Aorta (tissue), 5 donors: ENCODE measurements at regions of chr2 and their contacts with region 1.

Region 1: DNA sequence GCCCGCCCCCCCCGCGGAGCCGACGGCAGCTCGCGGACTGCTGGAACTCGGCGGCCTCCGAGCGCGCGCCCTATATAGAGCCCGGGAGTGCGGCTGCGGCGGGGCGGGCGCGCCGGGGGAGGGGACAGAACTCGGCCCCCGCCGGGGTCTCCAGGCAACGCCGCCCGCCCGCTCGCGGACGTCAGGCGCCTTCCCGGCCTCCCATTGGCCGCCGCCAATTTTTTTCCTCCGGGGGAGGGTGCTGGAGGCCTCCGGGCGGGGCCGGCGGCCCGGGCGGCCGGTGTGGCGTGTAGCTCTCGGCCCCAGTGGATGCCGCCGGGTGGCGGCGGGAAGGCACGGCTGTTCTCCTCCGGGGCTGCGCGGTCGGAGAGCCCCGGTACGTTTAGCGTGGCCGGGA is at the start of gene ZFP36L2:
- DNase-seq: peak; percentile 98
- ATAC-seq: peak; percentile 89
- H3K4me3 ChIP-seq: peak within 1 kb of the TSS; percentile 74 to 96
- H3K27ac ChIP-seq: peak within 1 kb of the TSS; percentile 71 to 94
- H3K4me1 ChIP-seq: no peaks in the 10 kb centered on the region
- H3K27me3 ChIP-seq: no peaks in the 10 kb centered on the region
- total RNA-seq, gene ZFP36L2: 180 to 231 TPM

Region 2: DNA sequence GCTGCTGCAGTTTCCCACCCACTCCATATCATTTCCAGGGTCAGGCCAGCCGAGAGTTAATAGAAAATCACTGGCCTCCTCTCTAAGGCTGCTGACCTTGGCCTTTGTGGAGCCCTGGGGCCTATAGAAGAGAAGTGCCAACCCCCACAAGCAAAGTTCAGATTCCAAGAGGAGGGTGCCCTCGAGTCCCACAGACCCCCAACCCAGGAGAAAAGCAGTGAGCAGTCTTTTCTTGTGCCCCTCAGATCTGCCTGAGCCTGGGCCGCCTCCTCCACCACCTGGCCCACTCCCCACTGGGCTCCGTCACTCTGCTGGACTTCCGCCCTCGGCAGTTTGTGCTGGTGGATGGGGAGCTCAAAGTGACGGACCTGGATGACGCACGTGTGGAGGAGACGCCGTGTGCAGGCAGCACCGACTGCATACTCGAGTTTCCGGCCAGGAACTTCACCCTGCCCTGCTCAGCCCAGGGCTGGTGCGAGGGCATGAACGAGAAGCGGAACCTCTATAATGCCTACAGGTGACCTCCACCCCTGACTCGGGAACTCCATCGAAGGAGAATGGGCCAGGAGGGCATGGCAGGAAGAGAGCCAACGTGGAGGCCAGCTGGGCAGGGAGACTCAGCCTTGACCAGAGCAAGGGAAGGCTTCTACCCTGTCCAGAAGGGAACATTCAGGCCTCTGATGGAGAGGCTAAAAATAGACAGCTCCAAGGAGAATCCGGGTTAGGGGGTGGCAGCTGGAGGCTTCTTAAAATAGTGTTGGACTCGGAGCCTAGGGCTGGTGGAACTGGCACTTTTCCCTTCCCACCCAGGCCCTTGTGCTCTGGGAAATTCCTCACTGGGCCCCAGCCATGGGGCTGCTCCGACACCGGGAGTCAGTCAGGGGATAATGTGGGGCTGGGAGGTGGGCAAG is 1172.5 kb before region 1 on chr2:
- intact Hi-C with region 1: loop called in 1 of 2 experiments (anchors 10 kb)
- DNase-seq: peak; percentile 84 to 88
- ATAC-seq: peak; percentile 81
- H3K4me3 ChIP-seq: no peak overlapping the region
- H3K27ac ChIP-seq: peak overlapping the region; percentile 79 to 91
- H3K4me1 ChIP-seq: peaks cover 3 to 6% of the 10 kb centered on the region in 2 donors
- H3K27me3 ChIP-seq: no peaks in the 10 kb centered on the region

Region 3: GRCh38 chr2:42944779-42945415 is 281.7 kb before region 1 on chr2:
- intact Hi-C with region 1: loop called in 1 of 2 experiments (anchors 5 kb)
- DNase-seq: no peak
- ATAC-seq: no peak
- H3K4me3 ChIP-seq: no peak overlapping the region
- H3K27ac ChIP-seq: no peak overlapping the region
- H3K4me1 ChIP-seq: no peaks in the 10 kb centered on the region
- H3K27me3 ChIP-seq: no peaks in the 10 kb centered on the region

Region 4: DNA sequence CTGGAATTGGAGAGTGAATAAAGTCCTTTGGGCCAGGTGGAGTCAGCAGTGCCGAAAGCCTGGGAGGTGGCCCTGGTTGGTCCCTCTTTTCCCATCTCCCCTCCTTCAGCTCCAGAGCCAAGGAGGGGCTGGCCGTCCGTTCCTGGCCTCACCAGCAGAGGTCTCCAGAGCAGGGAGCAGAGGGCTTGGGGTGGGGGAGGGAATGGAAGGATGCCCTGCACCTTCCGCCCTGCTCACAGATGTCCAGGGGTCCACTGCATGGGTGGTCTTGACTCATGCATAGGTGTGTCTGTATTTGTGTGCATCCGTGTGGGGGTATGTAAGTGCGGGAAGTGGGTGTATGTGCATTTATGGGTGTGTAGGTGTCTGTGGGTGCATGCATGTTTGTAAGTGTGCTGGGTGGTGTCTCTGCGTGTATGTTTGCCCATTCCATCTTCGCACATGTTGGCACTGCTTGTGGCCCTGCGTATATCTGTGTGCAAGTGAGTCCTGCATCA is 202.0 kb before region 1 on chr2:
- intact Hi-C with region 1: loop called (anchors 2 to 5 kb)
- DNase-seq: peak; percentile 76 to 90
- ATAC-seq: peak; percentile 64
- H3K4me3 ChIP-seq: no peak overlapping the region
- H3K27ac ChIP-seq: no peak overlapping the region
- H3K4me1 ChIP-seq: peaks cover 0 to 1% of the 10 kb centered on the region in 2 donors
- H3K27me3 ChIP-seq: no peaks in the 10 kb centered on the region

Region 5: GRCh38 chr2:43158259-43158880 is 68.2 kb before region 1 on chr2:
- intact Hi-C with region 1: no loop called
- DNase-seq: peak; percentile 87 to 90
- ATAC-seq: peak; percentile 72
- H3K4me3 ChIP-seq: no peak overlapping the region
- H3K27ac ChIP-seq: peak overlapping the region; percentile 80 to 95
- H3K4me1 ChIP-seq: peaks cover 0 to 4% of the 10 kb centered on the region in 2 donors
- H3K27me3 ChIP-seq: no peaks in the 10 kb centered on the region

Region 6: GRCh38 chr2:43178602-43179542 is 47.7 kb before region 1 on chr2:
- intact Hi-C with region 1: no loop called
- DNase-seq: peak; percentile 87 to 89
- ATAC-seq: peak; percentile 90
- H3K4me3 ChIP-seq: no peak overlapping the region
- H3K27ac ChIP-seq: peak overlapping the region in 1 of 2 donors; percentile 95
- H3K4me1 ChIP-seq: no peaks in the 10 kb centered on the region
- H3K27me3 ChIP-seq: no peaks in the 10 kb centered on the region

Region 7: DNA sequence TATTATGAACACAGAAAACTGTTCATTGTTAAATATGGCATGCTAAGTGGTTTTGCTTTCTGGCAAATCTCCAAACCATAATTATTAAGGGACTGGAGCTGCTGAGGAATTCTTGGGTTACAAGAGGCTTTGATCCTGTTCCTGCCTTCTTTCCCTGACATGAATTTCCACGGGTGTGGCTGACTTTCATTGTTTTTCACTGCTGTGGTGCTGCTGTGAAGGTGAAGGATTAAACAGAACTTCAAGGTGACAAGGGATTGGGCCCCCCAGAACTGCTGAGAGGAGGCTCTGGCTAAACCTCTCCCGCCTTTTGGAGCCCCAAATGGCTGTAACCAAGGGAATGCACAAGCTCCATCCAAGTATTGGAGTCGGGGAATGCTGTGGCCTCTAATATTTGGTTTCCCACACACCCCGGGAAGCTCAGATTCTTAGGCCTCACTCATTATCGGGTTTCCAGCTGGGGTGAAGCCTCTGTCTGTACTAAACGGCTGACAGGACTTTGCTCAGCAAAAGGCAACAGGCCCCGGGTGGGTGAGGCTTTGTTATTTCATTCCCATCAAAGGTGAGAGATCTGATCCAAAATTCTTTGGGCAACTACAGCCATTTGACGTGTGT is 28.8 kb after region 1 on chr2:
- intact Hi-C with region 1: no loop called
- DNase-seq: no peak
- ATAC-seq: no peak
- H3K4me3 ChIP-seq: no peak overlapping the region
- H3K27ac ChIP-seq: no peak overlapping the region
- H3K4me1 ChIP-seq: peaks cover 0 to 5% of the 10 kb centered on the region in 2 donors
- H3K27me3 ChIP-seq: no peaks in the 10 kb centered on the region

Region 8: DNA sequence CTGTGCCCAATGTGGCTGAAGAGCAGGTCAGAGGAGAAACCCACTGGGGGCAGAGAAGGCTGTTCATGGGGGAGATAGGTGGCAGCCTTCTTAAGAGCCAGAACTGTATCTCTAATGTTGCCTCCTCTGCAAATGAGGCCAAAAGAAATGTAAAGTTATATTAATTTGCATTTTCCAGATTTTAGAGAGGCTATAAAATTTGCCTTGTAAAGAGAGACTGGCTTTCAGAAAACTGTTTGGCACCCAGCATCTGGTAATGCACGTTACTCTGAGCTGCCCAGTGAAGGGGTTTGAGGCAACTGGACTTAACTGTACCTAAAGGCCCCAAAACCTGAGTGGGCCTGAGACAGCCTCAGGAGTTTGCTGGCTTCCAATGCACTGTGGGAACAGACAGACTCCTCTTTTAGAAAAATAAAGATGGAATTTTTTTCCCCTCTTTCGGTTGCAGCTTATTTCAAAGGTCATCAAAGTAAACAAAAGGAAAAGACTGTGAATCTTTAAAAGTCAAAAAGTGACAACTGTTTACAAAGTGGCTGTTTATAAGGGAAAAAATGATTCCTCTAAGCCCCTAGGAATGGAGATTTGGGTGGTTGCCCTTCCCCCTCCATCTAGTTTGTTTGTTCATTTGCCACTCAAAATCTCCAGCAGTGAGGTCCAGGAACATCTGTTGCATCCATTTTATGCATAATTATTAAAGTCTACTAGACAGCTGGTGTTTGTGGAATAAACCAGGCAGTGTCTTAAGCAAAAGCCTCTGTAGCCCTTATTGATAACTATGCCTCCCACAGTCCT is 132.1 kb after region 1 on chr2:
- intact Hi-C with region 1: no loop called
- DNase-seq: no peak
- ATAC-seq: no peak
- H3K4me3 ChIP-seq: no peak overlapping the region
- H3K27ac ChIP-seq: no peak overlapping the region
- H3K4me1 ChIP-seq: peaks cover 0 to 1% of the 10 kb centered on the region in 2 donors
- H3K27me3 ChIP-seq: no peaks in the 10 kb centered on the region

Region 9: DNA sequence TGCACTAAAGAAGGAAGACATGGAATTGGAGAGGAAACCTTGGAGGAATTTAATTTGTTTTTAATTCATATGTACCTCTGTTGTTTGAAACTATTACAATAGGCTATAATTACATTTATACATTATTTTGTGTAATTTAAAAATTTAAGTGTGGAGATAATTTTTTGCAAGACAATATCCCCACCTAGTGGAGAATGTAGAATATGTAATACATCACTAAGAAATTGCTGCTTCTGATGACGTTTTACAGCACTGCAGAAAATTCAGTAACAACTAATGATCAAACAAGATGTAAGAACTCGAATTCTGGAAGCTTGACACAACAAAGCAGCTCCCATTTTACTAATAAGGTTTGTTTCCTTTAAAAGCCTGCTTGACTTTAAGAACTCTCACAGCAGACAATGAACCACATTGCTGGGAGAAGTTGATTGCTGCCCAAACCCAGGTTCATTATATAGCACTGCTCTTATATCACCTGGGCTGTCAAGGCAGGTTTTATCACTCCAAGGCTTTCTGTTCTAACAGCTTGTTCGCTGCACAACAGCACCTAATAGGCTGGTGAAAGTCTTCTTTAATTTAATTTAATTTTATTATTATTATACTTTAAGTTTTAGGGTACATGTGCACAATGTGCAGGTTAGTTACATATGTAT is 315.9 kb after region 1 on chr2:
- intact Hi-C with region 1: loop called (anchors 2 to 5 kb)
- DNase-seq: no peak
- ATAC-seq: peak; percentile 72
- H3K4me3 ChIP-seq: no peak overlapping the region
- H3K27ac ChIP-seq: no peak overlapping the region
- H3K4me1 ChIP-seq: peaks cover 2 to 17% of the 10 kb centered on the region in 2 donors
- H3K27me3 ChIP-seq: no peaks in the 10 kb centered on the region